Left ventricle myocardium superior (tissue), 1 donor: ENCODE measurements at regions of chr3 and their contacts with region 1.

Region 1: DNA sequence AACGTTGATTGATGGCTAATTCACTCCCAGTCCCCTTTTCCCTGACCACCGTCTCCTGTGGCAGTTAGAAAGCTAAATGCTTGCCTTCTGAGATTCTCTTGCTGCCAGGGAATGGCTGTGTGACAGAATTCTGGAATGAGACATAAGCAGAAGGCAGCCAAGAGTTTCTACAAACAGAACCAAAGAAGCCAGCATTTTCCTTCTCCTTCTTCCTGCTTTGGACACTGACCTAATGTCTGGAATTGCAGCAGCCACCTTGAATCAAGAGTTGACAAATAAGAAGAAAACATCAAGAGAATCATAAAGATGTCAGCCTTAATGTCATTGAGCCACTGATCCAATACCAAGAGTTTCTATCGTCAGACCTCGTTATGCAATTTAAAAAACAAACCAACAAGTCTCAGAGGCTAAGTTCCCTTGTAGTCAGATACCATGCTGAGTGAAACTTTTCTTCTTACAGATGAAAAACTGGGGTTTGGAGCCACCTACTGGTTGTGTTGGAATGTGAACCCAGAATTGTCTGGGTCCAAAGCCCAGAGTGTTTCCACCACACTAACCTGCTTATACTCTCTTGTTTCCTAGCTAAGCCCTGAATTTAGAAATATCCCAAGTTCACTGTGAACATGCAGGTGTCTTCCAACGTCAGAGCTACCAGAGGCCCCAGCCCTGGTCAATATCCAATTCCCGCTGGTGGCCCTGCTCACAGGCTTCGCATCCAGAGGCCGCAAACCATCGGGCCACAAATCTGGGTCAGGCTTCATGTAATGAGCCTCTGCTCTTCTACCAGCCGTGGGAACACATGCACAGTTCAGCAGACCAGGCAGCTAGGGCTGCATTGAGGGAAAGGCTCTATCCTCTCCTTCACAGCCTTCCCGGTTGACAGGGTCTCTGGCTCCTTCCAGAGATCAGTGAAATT is 42.5 kb downstream of the MCF2L2 start:
- DNase-seq: no peak
- ATAC-seq: peak; percentile 86

Region 2: GRCh38 chr3:182450942-182451787 is 934.8 kb before region 1 on chr3:
- intact Hi-C with region 1: no loop called
- DNase-seq: no peak
- ATAC-seq: no peak

Region 3: GRCh38 chr3:183122257-183122932 is 263.6 kb before region 1 on chr3:
- intact Hi-C with region 1: loop called (anchors 1 kb)
- DNase-seq: no peak
- ATAC-seq: no peak

Region 4: GRCh38 chr3:183188895-183189462 is 197.0 kb before region 1 on chr3:
- intact Hi-C with region 1: loop called (anchors 2 kb)
- DNase-seq: peak; percentile 41
- ATAC-seq: peak; percentile 52

Region 5: DNA sequence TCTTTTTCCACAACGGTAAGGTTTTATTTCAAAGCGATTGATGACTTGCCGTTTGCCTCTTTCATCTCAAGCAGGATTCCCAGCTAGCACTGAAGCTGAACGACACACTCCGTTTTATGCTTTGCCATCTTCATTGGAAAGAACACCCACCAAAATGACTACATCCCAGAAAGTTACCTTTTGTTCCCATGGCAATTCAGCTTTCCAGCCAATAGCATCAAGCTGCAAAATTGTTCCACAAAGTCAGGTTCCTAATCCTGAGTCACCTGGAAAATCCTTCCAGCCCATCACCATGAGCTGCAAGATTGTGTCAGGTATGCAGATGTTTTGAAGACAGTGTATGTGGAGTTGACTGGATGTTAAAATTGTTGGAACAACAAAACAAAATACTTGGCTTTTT is 368.1 kb after region 1 on chr3:
- intact Hi-C with region 1: no loop called
- DNase-seq: no peak
- ATAC-seq: no peak

Region 6: GRCh38 chr3:183857863-183858262 is 471.9 kb after region 1 on chr3:
- intact Hi-C with region 1: no loop called
- DNase-seq: no peak
- ATAC-seq: no peak

Region 7: GRCh38 chr3:183924543-183924942 is 538.6 kb after region 1 on chr3:
- intact Hi-C with region 1: no loop called
- DNase-seq: no peak
- ATAC-seq: no peak